ENCODE measurements at regions of chr3 and their contacts with region 1.

Region 1: DNA sequence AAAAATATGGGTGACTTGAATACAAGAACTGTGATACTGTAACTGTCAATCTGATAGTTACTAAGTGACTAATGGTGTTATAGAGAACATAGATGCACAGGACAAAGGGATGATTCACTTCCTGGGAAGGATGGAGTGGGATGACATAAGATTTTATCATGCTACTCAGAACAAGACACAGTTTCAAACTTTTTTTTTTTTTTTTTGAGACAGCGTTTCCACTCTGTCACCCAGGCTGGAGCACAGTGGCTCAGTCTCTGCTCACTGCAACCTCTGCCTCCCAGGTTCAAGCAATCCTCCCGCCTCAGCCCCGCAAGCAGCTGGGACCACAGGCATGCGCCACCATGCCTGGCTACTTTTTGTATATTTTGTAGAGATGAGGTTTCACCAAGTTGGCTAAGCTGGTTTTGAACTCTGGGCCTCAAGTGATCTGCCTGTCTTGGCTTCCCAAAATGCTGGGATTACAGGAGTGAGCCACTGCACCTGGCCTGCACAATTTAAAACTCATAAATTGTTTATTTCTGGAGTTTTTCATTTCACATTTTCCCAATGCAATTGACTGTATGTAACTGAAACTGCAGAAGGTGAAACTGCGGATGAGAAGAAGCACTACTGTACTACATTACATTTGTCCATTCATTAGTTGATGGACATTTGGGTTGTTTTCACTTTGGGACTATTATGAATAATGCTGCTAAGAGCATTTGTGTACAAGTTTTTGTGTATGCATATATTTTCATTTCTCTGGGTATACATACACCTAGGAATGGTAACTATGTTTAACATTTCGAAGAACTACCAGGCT is 40.6 kb downstream of the ADIPOQ start:
- DNase-seq: peak; percentile 78
- ATAC-seq: peak; percentile 85
- H3K4me3 Mint-ChIP-seq: peak overlapping the region; percentile 20
- H3K27ac Mint-ChIP-seq: peak overlapping the region; percentile 90
- H3K4me1 Mint-ChIP-seq: peaks cover 62% of the 10 kb centered on the region
- H3K27me3 Mint-ChIP-seq: no peaks in the 10 kb centered on the region

Region 2: GRCh38 chr3:186108941-186109865 is 773.9 kb before region 1 on chr3 and contains the start of gene ETV5:
- CTCF ChIA-PET with region 1: no interaction called
- POLR2A ChIA-PET with region 1: no interaction called
- intact Hi-C with region 1: loop called in 1 of 2 experiments (anchors 2 kb)
- DNase-seq: peak; percentile 96
- ATAC-seq: peak; percentile 96
- H3K4me3 Mint-ChIP-seq: peak within 1 kb of the TSS; percentile 73
- H3K27ac Mint-ChIP-seq: peak within 1 kb of the TSS; percentile 42
- H3K4me1 Mint-ChIP-seq: peaks cover 34% of the 10 kb centered on the region
- H3K27me3 Mint-ChIP-seq: peaks cover 69% of the 10 kb centered on the region
- total RNA-seq, gene ETV5: 0.83 to 1.4 TPM

Region 3: GRCh38 chr3:186826976-186827731 is 55.9 kb before region 1 on chr3:
- CTCF ChIA-PET with region 1: no interaction called
- POLR2A ChIA-PET with region 1: interaction called, 3 read pairs
- intact Hi-C with region 1: loop called in 1 of 2 experiments (anchors 1 kb)
- DNase-seq: peak; percentile 91
- ATAC-seq: peak; percentile 83
- H3K4me3 Mint-ChIP-seq: peak overlapping the region; percentile 82
- H3K27ac Mint-ChIP-seq: no peak overlapping the region
- H3K4me1 Mint-ChIP-seq: peaks cover 23% of the 10 kb centered on the region
- H3K27me3 Mint-ChIP-seq: peaks cover 31% of the 10 kb centered on the region

Region 4: DNA sequence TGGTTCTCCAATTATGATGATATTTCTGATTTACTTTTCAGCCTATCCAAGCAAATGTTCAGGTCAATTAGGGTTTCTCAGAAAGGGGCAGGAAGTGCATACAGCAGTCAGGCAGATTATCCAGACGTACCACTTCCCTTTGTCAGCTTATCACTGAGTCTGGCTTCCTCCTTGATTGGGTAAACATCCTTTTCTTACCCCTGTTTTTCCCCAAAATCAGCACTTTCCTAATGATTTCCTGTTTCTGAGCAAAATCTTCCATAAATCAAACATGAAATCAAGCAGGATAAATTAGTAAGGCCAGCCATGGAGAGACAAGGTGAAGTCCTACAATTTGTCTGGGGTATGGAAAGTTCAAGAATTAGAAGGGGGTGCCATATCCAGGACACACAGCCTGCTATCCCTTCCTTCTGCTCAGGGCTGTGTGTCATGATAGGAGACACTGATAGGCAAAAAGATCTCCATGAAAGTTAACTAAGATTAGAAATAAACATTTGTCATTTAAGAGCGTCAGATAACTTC is 11.6 kb before region 1 on chr3:
- CTCF ChIA-PET with region 1: interaction called, 7 read pairs
- POLR2A ChIA-PET with region 1: no interaction called
- intact Hi-C with region 1: loop called in 1 of 2 experiments (anchors 2 kb)
- DNase-seq: no peak
- ATAC-seq: peak; percentile 66
- H3K4me3 Mint-ChIP-seq: no peak overlapping the region
- H3K27ac Mint-ChIP-seq: peak overlapping the region; percentile 64
- H3K4me1 Mint-ChIP-seq: peaks cover 28% of the 10 kb centered on the region
- H3K27me3 Mint-ChIP-seq: no peaks in the 10 kb centered on the region

Region 5: DNA sequence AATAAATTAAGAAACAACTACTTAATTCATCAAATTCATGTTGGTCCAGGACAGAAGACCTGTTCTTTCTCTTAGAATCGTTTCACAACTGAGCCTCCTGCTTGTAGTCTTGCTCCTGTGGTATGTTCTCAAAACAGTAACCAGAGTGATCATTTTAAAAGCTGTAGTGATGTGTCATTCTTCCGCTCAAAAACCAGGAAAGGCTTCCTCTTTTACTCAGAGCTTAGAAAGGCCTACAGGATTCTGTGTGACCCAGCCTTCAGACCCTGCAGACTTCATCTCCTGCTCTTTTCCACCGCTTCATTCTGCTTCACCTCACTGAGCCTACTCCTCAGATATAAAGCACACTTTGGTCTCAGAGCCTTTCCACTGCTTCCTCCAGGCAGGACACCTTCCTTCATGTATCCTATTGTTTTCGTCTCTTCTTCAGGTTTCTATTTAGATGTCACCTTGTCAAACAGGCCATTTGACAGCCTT is 70.0 kb after region 1 on chr3:
- CTCF ChIA-PET with region 1: no interaction called
- POLR2A ChIA-PET with region 1: no interaction called
- intact Hi-C with region 1: loop called (anchors 2 kb)
- DNase-seq: no peak
- ATAC-seq: peak; percentile 90
- H3K4me3 Mint-ChIP-seq: peak overlapping the region; percentile 10
- H3K27ac Mint-ChIP-seq: peak overlapping the region; percentile 81
- H3K4me1 Mint-ChIP-seq: peaks cover 73% of the 10 kb centered on the region
- H3K27me3 Mint-ChIP-seq: no peaks in the 10 kb centered on the region

Region 6: DNA sequence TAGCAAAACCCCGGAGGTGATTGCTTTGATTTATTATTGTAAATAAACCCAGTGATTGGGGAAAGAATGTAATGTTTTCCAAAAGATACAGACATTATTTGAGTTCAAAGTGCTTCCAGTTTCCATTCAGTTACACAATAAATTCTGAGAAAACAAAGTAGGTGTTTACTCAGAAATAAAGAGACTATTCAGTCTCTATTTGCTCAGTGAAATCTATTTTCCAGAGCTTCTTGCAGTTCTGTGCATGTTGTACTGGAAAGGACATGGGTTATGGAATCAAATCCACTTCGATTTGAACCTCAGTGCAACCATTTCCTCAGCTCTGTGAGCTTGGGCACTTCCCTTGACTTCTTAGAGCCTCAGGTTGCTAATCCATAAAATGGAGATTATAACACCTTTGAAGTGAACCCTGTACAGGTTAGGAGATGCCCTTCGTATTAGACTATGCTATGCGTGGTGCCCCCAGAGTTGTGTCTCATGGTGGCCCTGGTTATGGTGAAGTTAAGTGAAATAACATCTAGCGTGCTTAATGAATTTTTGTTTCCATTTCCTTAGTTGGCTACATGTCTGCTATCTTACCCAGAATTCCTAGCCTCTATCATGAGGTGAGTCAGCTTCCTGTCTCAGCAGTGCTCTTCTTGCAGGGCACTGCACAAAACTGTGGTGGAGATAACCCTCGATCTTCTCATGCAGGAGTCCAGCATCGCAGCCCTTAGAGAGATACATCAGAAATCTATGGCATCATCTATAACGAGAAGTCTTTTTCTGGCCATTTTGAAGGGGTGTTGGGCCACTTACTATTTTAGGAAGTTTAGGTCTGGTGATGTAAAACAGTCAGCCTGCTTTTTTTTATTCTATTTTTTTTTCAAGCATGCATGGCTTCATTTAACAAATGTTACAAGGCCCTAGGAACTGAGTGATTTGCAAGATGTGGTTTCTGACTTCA is 158.6 kb after region 1 on chr3:
- CTCF ChIA-PET with region 1: no interaction called
- POLR2A ChIA-PET with region 1: no interaction called
- intact Hi-C with region 1: loop called in 1 of 2 experiments (anchors 1 kb)
- DNase-seq: peak; percentile 61
- ATAC-seq: peak; percentile 92
- H3K4me3 Mint-ChIP-seq: peak overlapping the region; percentile 40
- H3K27ac Mint-ChIP-seq: peak overlapping the region; percentile 95
- H3K4me1 Mint-ChIP-seq: peaks cover 81% of the 10 kb centered on the region
- H3K27me3 Mint-ChIP-seq: no peaks in the 10 kb centered on the region

Measured in activated CD4-positive, alpha-beta T cell treated with anti-CD3 and anti-CD28 coated beads for 36 hours (primary cell).